AG04449 (cell line): ENCODE measurements at regions of chr14 and their contacts with region 1.

Region 1: DNA sequence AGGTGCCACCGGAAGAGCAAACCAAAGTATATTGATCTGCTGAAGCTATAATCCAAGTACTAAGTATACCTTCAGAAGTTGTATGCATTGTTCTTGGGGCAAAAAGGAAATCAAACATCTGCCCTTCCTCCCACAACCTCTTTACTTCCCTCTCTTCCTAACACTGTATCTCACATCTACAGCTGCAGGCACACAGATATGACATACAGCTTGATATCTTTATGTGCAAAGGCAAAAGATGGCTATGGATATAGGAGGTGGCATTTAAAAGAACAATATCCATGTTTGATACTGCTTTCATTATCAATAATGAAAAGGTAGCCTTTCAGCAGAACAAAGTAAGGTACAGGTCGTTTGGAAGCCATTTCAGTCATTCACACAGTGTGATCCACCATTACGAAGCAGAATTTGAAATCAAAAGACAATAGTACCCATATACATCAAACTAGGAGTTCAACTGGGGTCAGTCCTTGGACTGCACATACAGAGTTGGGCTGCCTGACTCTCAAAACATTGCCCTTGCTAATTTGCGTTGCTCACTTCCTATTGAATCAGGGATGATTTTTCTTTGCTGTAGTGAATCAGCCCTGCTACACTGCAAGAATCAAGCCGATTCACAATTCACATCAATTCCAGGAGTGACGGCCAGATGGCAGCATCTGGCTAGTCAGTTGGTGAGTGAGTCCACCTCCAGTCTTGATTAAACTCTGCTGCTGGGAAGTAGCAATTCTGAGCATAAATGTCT is 8.9 kb downstream of the ANG start:
- DNase-seq: no peak
- H3K4me3 ChIP-seq: no peak overlapping the region
- CTCF ChIP-seq: peak; percentile 81

Region 2: DNA sequence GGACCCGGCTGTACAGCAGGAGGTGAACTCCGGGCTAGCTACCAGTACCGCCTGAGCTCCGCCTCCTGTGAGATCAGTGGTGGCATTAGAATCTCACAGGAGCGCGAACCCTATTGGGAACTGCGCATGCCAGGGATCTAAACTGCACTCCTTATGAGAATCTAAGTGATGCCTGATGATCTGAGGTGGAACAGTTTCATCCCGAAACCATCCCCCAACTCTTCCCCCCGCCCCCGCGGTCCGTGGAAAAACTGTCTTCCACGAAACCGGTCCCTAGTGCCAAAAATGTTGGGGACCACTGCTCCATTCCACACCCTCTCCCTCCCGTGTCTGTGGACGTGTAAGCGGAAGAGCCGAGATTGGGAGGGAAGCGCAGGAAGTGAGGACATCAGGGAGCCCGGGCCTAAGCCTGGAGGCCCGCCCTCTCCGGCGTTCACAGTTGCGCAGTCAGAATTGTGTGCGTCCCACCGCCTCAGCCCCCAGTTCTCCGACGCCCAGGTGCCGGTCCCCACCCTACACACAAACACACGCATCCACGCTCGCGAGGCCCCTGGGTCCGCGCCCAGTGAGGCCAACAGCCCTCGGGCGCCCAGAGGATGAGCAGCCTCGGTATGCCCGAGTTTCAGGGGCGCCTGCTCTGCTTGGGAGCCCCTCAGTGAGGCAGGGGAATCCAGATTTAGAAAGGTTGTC is 14.9 kb before region 1 on chr14:
- CTCF ChIA-PET with region 1: interaction called, 29 read pairs
- POLR2A ChIA-PET with region 1: no interaction called
- DNase-seq: no peak
- H3K4me3 ChIP-seq: peak overlapping the region; percentile 96
- CTCF ChIP-seq: no peak

Region 3: DNA sequence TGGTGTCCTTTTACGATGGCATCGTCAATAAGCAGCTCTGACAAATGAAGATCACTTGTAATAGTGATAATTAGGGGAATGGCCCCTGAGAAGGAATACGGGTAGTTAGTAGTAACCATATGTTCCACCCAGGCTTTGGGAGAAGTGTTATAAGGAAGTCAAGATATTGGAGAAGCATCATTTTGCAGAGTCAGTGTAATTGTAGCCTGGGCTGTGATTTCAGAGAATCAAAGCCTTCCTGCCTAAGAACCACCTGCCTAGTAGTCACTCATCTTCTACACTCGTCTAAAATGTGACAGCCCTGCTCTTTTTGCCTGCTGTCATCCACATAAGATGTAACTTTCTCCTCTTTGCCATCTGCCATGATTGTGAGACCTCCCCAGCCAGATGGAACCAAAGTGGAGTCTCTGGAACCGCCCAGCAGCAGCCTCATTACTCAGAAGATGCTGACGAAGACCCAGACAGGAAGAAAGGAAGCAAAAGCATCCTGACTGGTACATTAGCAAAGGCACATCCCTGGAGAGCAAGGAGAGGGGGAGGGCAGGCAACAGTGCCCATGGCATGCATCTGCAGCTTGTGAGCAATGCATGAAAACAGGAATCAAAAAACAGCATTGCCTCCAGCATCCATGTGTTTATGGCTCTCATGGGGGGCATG is 35.7 kb after region 1 on chr14:
- CTCF ChIA-PET with region 1: no interaction called
- POLR2A ChIA-PET with region 1: no interaction called
- DNase-seq: no peak
- H3K4me3 ChIP-seq: no peak overlapping the region
- CTCF ChIP-seq: no peak